ENCODE measurements at regions of chr5 and their contacts with region 1.

Region 1: DNA sequence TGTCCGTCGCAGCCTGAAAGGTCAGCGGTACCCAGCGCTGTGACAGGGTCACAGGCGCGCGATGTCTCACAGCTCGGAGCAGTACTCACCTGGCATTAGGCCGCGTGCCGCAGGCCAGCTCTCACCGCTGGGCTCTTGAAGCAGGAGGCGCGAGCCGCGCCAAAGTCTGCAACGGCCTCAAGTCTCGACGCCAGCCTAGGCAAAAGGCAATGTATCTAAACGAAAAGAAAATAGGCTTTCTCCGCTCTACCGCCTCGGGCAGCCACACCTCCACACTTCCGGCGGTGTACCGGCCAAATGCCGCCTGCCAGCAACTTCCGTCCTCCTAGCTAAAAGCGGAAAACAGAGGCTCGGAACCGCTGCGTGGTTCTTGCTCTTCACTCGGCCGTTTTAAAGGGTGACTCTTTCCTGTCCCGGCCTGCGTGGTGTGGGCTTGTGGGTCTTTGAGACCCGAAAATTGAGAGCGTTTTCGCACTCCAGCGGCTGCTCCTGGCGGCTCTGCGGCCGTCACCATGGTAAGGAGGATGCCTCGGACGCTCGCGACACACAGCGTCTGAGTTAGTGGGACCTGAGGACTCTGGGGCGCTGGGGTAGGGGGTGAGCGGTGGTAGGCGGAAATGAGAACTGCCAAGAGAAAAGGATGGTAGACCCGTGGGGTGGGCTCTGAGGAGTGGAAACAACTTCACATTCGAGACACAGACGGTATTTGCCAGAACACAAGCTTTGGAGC is at the starts of genes GFM2 and NSA2:
- DNase-seq: peak; percentile 86 to 95 (median 91)
- ATAC-seq: peak; percentile 85
- H3K4me3 ChIP-seq: peak within 1 kb of the TSS; percentile 100
- H3K4me3 Mint-ChIP-seq: peak within 1 kb of the TSS; percentile 98
- H3K27ac ChIP-seq: peak within 1 kb of the TSS; percentile 66 to 82
- H3K27ac Mint-ChIP-seq: peak within 1 kb of the TSS; percentile 94
- H3K4me1 ChIP-seq: peaks cover 29% of the 10 kb centered on the region
- H3K4me1 Mint-ChIP-seq: peaks cover 46% of the 10 kb centered on the region
- H3K27me3 ChIP-seq: no peaks in the 10 kb centered on the region
- H3K27me3 Mint-ChIP-seq: no peaks in the 10 kb centered on the region
- CTCF ChIP-seq: no peak
- total RNA-seq, gene GFM2: 10.9 to 12.3 TPM
- total RNA-seq, gene NSA2: 190 to 200 TPM

Region 2: GRCh38 chr5:73565139-73565968 is 1201.7 kb before region 1 on chr5 and contains the starts of genes ANKRA2 and UTP15:
- CTCF ChIA-PET with region 1: no interaction called
- POLR2A ChIA-PET with region 1: no interaction called
- intact Hi-C with region 1: loop called in 1 of 2 experiments (anchors 10 kb)
- DNase-seq: peak; percentile 96 to 100 (median 98)
- ATAC-seq: peak; percentile 92
- H3K4me3 ChIP-seq: peak within 1 kb of the TSS; percentile 81
- H3K4me3 Mint-ChIP-seq: peak within 1 kb of the TSS; percentile 93
- H3K27ac ChIP-seq: peak within 1 kb of the TSS; percentile 90 to 94
- H3K27ac Mint-ChIP-seq: peak within 1 kb of the TSS; percentile 95
- H3K4me1 ChIP-seq: peaks cover 14% of the 10 kb centered on the region
- H3K4me1 Mint-ChIP-seq: peaks cover 63% of the 10 kb centered on the region
- H3K27me3 ChIP-seq: no peaks in the 10 kb centered on the region
- H3K27me3 Mint-ChIP-seq: no peaks in the 10 kb centered on the region
- CTCF ChIP-seq: no peak
- total RNA-seq, gene ANKRA2: 45.0 to 45.1 TPM
- total RNA-seq, gene UTP15: 52.0 to 55.2 TPM

Region 3: GRCh38 chr5:74865804-74866595 is 99.0 kb after region 1 on chr5 and contains the start of gene FAM169A:
- CTCF ChIA-PET with region 1: no interaction called
- POLR2A ChIA-PET with region 1: interaction called, 6 read pairs
- intact Hi-C with region 1: loop called in 1 of 2 experiments (anchors 5 kb)
- DNase-seq: peak; percentile 25 to 75 (median 47)
- ATAC-seq: peak; percentile 73
- H3K4me3 ChIP-seq: peak within 1 kb of the TSS; percentile 71
- H3K4me3 Mint-ChIP-seq: peak within 1 kb of the TSS; percentile 94
- H3K27ac ChIP-seq: no peak within 1 kb of the TSS
- H3K27ac Mint-ChIP-seq: peak within 1 kb of the TSS; percentile 89
- H3K4me1 ChIP-seq: peaks cover 15% of the 10 kb centered on the region
- H3K4me1 Mint-ChIP-seq: peaks cover 51% of the 10 kb centered on the region
- H3K27me3 ChIP-seq: peaks cover 0 to 7% of the 10 kb centered on the region in 2 experiments
- H3K27me3 Mint-ChIP-seq: peaks cover 5% of the 10 kb centered on the region
- CTCF ChIP-seq: no peak
- total RNA-seq, gene FAM169A: 13.3 to 14.7 TPM

Region 4: DNA sequence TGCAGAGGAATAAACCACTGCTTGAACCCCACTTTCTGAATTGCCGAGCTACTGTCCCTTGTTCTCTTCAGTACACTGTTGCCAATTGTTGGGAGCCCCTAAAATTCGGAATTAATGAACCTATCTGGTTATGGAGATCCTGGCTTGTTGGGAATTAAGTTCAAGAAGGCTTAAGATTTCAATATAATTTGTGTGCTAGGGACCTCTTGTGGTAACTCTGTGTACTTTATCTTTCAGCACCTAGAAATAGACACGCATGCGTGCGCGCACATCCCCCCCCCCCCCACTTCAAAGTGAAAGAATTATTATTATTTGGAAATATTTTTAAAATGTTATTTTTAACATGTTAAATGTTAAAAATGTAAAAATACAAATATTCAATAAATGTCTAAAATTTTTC is 152.5 kb after region 1 on chr5:
- CTCF ChIA-PET with region 1: interaction called, 3 read pairs
- POLR2A ChIA-PET with region 1: no interaction called
- intact Hi-C with region 1: loop called (anchors 1 to 2 kb)
- DNase-seq: peak in 4 of 14 experiments; percentile 35 to 69 (median 61)
- ATAC-seq: peak; percentile 69
- H3K4me3 ChIP-seq: no peak overlapping the region
- H3K4me3 Mint-ChIP-seq: no peak overlapping the region
- H3K27ac ChIP-seq: no peak overlapping the region
- H3K27ac Mint-ChIP-seq: no peak overlapping the region
- H3K4me1 ChIP-seq: no peaks in the 10 kb centered on the region
- H3K4me1 Mint-ChIP-seq: no peaks in the 10 kb centered on the region
- H3K27me3 ChIP-seq: no peaks in the 10 kb centered on the region
- H3K27me3 Mint-ChIP-seq: no peaks in the 10 kb centered on the region
- CTCF ChIP-seq: peak; percentile 62

Region 5: DNA sequence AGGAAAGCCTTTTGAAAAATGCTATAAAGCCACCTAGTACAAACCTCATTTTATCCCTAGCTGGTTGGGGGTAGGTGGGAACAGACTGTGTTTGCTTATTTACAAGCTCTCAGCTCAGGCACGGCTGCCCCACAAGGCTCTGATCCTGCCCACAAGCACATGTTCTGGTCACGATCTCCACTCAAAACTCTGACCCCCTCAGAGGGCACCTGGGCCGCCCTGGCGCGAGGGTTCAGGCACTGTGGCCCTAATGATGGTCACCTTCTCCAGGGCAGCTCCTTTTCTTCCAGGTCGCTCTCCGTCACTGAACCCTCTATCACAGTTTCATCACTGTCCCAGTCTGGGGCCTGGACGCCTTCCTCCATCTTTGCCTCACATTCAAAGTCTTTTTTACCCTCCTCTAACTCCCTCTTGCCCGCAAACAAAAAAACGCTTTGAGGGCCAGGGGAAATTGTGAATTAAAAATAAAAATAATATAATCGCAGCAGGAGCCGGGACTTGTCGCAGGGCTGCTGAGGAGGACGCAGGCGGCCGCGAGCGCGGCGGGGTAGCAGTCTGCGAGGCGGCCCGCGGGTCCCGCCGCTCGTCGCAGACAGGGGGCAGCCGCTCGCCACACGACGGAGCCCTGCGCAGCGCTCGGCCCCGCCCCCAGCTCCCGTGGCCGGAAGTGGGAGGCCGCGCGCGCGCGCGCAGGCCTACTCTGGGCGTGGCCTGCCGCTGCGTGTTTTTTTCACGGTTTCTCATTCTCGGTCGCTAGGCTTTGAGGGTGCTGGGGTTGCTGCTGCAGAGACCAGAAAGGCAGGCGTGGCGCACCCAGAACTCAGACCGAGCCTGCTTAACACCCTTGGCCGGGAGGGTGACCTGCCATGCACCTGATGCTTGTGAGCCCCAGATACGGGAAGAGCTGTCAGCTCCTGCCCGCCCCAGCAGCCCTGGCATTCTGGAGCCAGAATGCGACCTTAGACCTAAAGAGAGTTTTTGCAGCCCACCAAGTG is 469.6 kb after region 1 on chr5 and contains the start of gene ANKRD31:
- CTCF ChIA-PET with region 1: interaction called, 4 read pairs
- POLR2A ChIA-PET with region 1: interaction called, 9 read pairs
- intact Hi-C with region 1: loop called (anchors 1 to 10 kb)
- DNase-seq: peak; percentile 80 to 97 (median 90)
- ATAC-seq: peak; percentile 98
- H3K4me3 ChIP-seq: peak within 1 kb of the TSS; percentile 76
- H3K4me3 Mint-ChIP-seq: peak within 1 kb of the TSS; percentile 96
- H3K27ac ChIP-seq: peak within 1 kb of the TSS; percentile 58 to 79
- H3K27ac Mint-ChIP-seq: peak within 1 kb of the TSS; percentile 94
- H3K4me1 ChIP-seq: peaks cover 13% of the 10 kb centered on the region
- H3K4me1 Mint-ChIP-seq: peaks cover 19% of the 10 kb centered on the region
- H3K27me3 ChIP-seq: no peaks in the 10 kb centered on the region
- H3K27me3 Mint-ChIP-seq: no peaks in the 10 kb centered on the region
- CTCF ChIP-seq: peak; percentile 80
- total RNA-seq, gene ANKRD31: 0.55 to 0.56 TPM

Region 6: DNA sequence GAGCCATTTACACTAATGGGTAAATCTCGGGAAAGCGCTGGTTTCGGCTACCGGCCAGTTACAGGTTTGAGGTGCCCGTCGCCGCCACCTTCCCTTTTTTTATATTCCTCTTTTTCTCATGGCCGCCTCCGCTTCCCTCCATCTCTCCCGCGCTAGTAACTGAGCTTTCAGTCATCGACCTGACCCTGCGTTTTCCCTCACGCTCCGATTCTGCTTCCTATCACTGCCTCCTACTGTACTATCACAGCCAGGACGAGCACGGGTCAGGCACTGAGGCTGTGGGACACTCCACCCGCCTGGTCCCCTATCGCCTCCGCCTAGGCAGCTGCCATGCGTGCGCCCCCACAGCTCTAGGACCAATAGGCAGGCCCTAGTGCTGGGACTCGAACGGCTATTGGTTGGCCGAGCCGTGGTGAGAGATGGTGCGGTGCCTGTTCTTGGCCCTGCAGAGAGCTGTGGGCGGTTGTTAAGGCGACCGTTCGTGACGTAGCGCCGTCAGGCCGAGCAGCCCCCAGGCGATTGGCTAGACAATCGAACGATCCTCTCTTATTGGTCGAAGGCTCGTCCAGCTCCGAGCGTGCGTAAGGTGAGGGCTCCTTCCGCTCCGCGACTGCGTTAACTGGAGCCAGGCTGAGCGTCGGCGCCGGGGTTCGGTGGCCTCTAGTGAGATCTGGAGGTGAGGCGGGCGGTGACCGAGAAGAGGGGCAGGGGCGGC is 569.8 kb after region 1 on chr5 and contains the start of gene HMGCR:
- CTCF ChIA-PET with region 1: interaction called, 3 read pairs
- POLR2A ChIA-PET with region 1: interaction called, 4 read pairs
- intact Hi-C with region 1: loop called (anchors 5 to 10 kb)
- DNase-seq: peak; percentile 91 to 99 (median 95)
- ATAC-seq: peak; percentile 90
- H3K4me3 ChIP-seq: peak within 1 kb of the TSS; percentile 82
- H3K4me3 Mint-ChIP-seq: no peak within 1 kb of the TSS
- H3K27ac ChIP-seq: peak within 1 kb of the TSS; percentile 64 to 88
- H3K27ac Mint-ChIP-seq: no peak within 1 kb of the TSS
- H3K4me1 ChIP-seq: peaks cover 5% of the 10 kb centered on the region
- H3K4me1 Mint-ChIP-seq: peaks cover 38% of the 10 kb centered on the region
- H3K27me3 ChIP-seq: no peaks in the 10 kb centered on the region
- H3K27me3 Mint-ChIP-seq: no peaks in the 10 kb centered on the region
- CTCF ChIP-seq: no peak
- total RNA-seq, gene HMGCR: 55.5 to 61.5 TPM

Region 7: DNA sequence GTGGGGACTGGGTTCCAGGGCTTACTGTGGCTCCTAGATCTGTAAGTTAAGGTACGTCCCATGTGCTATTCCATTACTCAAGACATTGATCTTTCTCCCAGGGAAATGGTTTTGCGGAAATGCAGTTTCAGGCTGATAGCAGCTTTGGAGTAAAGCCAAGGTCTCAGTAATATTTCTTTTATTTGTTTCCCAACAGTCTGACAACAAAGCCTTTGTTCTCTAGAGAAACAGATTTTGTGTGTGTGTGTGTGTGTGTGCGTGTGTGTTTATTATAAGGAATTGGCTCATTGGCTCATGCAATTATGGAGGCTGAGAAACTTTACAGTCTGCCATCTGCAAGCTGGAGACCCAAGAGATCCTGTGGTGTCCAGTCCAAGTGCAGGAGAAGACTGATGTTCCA is 962.3 kb after region 1 on chr5:
- CTCF ChIA-PET with region 1: no interaction called
- POLR2A ChIA-PET with region 1: no interaction called
- intact Hi-C with region 1: loop called in 1 of 2 experiments (anchors 10 kb)
- DNase-seq: no peak
- ATAC-seq: no peak
- H3K4me3 ChIP-seq: no peak overlapping the region
- H3K4me3 Mint-ChIP-seq: no peak overlapping the region
- H3K27ac ChIP-seq: no peak overlapping the region
- H3K27ac Mint-ChIP-seq: no peak overlapping the region
- H3K4me1 ChIP-seq: no peaks in the 10 kb centered on the region
- H3K4me1 Mint-ChIP-seq: no peaks in the 10 kb centered on the region
- H3K27me3 ChIP-seq: no peaks in the 10 kb centered on the region
- H3K27me3 Mint-ChIP-seq: peaks cover 19% of the 10 kb centered on the region
- CTCF ChIP-seq: no peak

Measured in CD4-positive, alpha-beta T cell (primary cell).